ENCODE measurements at regions of chr12 and their contacts with region 1.

Region 1: GRCh38 chr12:5988659-5989116 is 43.6 kb upstream of the ANO2 start:
- H3K4me3 ChIP-seq: no peak overlapping the region
- H3K27ac ChIP-seq: no peak overlapping the region
- H3K4me1 ChIP-seq: no peaks in the 10 kb centered on the region
- CTCF ChIP-seq: peak; percentile 91

Region 2: GRCh38 chr12:5973461-5974130 is 15.1 kb before region 1 on chr12:
- CTCF ChIA-PET with region 1: interaction called, 56 read pairs
- POLR2A ChIA-PET with region 1: no interaction called
- H3K4me3 ChIP-seq: no peak overlapping the region
- H3K27ac ChIP-seq: no peak overlapping the region
- H3K4me1 ChIP-seq: no peaks in the 10 kb centered on the region
- CTCF ChIP-seq: no peak

Region 3: DNA sequence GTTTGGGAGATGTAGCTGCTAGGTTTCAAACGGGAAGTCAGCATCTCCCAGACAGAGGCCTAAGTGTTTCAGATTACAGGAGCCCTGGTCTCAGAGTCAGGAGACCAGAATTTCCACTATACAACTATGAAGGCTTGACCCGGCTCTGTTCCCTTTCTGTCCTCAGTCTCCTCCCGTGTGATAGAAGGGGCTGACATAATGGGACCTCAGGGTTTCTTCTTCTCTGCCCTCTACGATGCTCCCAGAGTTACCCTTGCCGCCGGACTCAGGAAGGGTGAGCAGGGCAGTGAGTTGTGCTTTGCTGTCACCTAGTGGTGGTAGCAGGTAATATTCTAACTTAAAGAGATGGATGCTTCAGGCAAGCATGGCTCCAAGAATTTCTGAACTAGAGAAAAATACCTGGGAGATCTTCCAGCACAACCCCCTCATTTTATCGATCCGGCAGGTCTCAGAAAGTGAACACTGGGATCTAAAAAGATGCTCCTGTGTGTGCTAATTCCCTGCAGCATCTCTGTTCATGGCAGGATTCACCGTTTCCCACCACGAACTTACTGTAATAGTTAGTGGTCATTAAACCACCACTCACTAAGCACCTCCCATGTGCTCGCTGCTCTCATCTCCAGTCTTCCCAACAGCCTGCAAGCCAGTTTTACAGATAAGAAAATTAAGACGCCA is 51.3 kb after region 1 on chr12:
- CTCF ChIA-PET with region 1: interaction called, 349 read pairs
- POLR2A ChIA-PET with region 1: interaction called, 6 read pairs
- H3K4me3 ChIP-seq: no peak overlapping the region
- H3K27ac ChIP-seq: no peak overlapping the region
- H3K4me1 ChIP-seq: no peaks in the 10 kb centered on the region
- CTCF ChIP-seq: peak; percentile 81

Region 4: GRCh38 chr12:6195665-6196535 is 207.2 kb after region 1 on chr12:
- CTCF ChIA-PET with region 1: interaction called, 13 read pairs
- POLR2A ChIA-PET with region 1: no interaction called
- H3K4me3 ChIP-seq: no peak overlapping the region
- H3K27ac ChIP-seq: no peak overlapping the region
- H3K4me1 ChIP-seq: no peaks in the 10 kb centered on the region
- CTCF ChIP-seq: peak; percentile 81

Region 5: GRCh38 chr12:6295094-6295811 is 306.6 kb after region 1 on chr12:
- CTCF ChIA-PET with region 1: interaction called, 10 read pairs
- POLR2A ChIA-PET with region 1: no interaction called
- H3K4me3 ChIP-seq: no peak overlapping the region
- H3K27ac ChIP-seq: no peak overlapping the region
- H3K4me1 ChIP-seq: 0 out of 2 replicates have a peak, but pooled peaks cover 3% of the 10 kb centered on the region
- CTCF ChIP-seq: no peak

Measured in HEK293 (cell line).